ENCODE measurements at regions of chr1 and their contacts with region 1.

Region 1: GRCh38 chr1:193674292-193674944 is 488.0 kb upstream of the B3GALT2 start:
- DNase-seq: no peak
- ATAC-seq: no peak
- H3K4me3 ChIP-seq: no peak overlapping the region
- H3K4me3 Mint-ChIP-seq: no peak overlapping the region
- H3K27ac ChIP-seq: no peak overlapping the region
- H3K27ac Mint-ChIP-seq: no peak overlapping the region
- H3K4me1 ChIP-seq: no peaks in the 10 kb centered on the region
- H3K4me1 Mint-ChIP-seq: no peaks in the 10 kb centered on the region
- H3K27me3 ChIP-seq: no peaks in the 10 kb centered on the region
- H3K27me3 Mint-ChIP-seq: peaks cover 7% of the 10 kb centered on the region
- CTCF ChIP-seq: no peak

Region 2: DNA sequence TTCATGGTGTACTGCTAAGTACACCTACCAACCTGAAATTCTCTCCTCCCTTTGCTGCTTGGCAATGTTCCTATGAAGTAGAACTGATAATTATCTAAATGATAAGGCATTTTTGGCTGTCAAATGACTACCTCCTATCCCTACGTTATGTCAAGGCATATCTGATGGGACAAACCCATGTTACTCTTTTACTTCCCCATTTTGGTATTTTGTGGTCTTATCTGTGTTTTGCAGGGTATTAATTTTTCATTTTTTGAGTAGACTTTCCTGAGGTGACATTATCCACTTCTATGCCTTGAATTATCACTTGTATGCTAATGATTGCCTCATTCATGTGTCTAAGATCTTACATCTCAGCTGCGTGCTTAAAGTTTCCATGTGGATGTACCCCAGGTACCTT is 11.6 kb after region 1 on chr1:
- CTCF ChIA-PET with region 1: no interaction called
- POLR2A ChIA-PET with region 1: no interaction called
- intact Hi-C with region 1: loop called (anchors 2 kb)
- DNase-seq: no peak
- ATAC-seq: no peak
- H3K4me3 ChIP-seq: no peak overlapping the region
- H3K4me3 Mint-ChIP-seq: no peak overlapping the region
- H3K27ac ChIP-seq: no peak overlapping the region
- H3K27ac Mint-ChIP-seq: no peak overlapping the region
- H3K4me1 ChIP-seq: peaks cover 0 to 5% of the 10 kb centered on the region in 2 donors
- H3K4me1 Mint-ChIP-seq: no peaks in the 10 kb centered on the region
- H3K27me3 ChIP-seq: no peaks in the 10 kb centered on the region
- H3K27me3 Mint-ChIP-seq: peaks cover 17% of the 10 kb centered on the region
- CTCF ChIP-seq: no peak

Measured in B cell (primary cell).